AG04449 (cell line): ENCODE measurements at regions of chr11 and their contacts with region 1.

Region 1: GRCh38 chr11:61871158-61871597 is 20.2 kb downstream of the FADS3 start:
- DNase-seq: peak; percentile 12
- H3K4me3 ChIP-seq: peak overlapping the region; percentile 21
- CTCF ChIP-seq: peak; percentile 97

Region 2: GRCh38 chr11:61688365-61689163 is 182.6 kb before region 1 on chr11:
- CTCF ChIA-PET with region 1: no interaction called
- POLR2A ChIA-PET with region 1: no interaction called
- DNase-seq: no peak
- H3K4me3 ChIP-seq: no peak overlapping the region
- CTCF ChIP-seq: no peak

Region 3: DNA sequence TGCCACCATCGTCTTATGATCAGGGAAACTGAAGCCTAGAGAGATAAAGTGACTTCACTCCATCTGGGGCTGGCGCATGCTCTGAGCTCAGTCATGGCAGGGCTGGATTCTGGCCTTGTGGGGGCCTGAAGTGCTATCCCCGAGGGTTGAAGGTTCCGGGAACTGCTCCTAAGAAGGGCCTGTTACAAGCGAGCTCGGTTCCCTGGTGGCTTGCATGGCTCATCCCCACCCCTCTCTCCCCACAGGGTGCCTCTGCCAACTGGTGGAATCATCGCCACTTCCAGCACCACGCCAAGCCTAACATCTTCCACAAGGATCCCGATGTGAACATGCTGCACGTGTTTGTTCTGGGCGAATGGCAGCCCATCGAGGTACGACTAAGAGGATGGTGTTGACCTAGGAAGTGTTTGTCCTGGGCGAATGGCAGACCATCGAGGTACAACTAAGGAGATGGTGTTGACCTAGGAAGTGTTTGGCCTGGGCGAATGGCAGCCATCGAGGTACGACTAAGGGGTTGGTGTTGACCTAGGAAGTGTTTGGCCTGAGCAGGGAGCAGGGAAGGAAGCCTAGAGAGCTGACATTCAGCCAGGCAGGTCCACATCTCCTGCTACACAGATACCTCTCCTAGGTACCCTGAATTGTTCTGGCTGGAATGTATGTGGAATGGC is 23.1 kb before region 1 on chr11:
- CTCF ChIA-PET with region 1: interaction called, 11 read pairs
- POLR2A ChIA-PET with region 1: no interaction called
- DNase-seq: no peak
- H3K4me3 ChIP-seq: no peak overlapping the region
- CTCF ChIP-seq: no peak

Region 4: GRCh38 chr11:61860054-61860903 is 10.9 kb before region 1 on chr11:
- CTCF ChIA-PET with region 1: interaction called, 10 read pairs
- POLR2A ChIA-PET with region 1: no interaction called
- DNase-seq: no peak
- H3K4me3 ChIP-seq: no peak overlapping the region
- CTCF ChIP-seq: no peak

Region 5: DNA sequence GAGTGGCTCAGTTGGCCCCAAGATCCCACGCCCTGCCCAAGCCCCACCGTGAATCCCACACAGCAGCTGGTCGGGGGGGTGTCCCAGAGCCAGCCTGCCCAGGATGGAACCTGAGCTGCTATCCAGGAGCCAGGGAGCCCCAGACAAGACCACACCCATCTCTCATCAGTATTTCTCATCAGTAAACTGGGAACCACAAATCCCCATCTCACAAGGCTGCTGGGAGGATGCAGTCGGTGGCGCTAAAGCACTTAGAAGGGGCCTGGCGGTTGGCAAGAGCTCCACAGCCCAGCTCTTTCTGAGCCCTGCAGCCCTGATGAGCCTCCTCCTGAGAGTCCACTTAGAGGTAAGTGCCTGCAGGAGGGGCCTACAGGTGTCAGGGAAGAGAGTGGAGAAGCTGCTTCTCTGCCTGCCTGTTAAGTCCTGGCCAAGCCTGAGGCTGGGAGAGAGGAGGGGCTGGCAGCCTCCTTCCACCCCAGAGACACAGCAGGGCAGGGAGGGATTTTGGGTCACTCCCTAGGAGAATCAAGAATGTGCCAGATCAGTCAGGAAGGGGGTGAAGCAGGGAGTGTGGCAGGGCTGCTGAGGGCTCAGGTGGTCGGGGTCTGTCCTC is 14.1 kb after region 1 on chr11:
- CTCF ChIA-PET with region 1: interaction called, 79 read pairs
- POLR2A ChIA-PET with region 1: interaction called, 4 read pairs
- DNase-seq: no peak
- H3K4me3 ChIP-seq: no peak overlapping the region
- CTCF ChIP-seq: no peak

Region 6: GRCh38 chr11:61891331-61892084 is 20.3 kb after region 1 on chr11 and contains the start of gene FADS3:
- CTCF ChIA-PET with region 1: interaction called, 110 read pairs
- POLR2A ChIA-PET with region 1: interaction called, 4 read pairs
- DNase-seq: no peak
- H3K4me3 ChIP-seq: peak within 1 kb of the TSS; percentile 90
- CTCF ChIP-seq: no peak

Region 7: DNA sequence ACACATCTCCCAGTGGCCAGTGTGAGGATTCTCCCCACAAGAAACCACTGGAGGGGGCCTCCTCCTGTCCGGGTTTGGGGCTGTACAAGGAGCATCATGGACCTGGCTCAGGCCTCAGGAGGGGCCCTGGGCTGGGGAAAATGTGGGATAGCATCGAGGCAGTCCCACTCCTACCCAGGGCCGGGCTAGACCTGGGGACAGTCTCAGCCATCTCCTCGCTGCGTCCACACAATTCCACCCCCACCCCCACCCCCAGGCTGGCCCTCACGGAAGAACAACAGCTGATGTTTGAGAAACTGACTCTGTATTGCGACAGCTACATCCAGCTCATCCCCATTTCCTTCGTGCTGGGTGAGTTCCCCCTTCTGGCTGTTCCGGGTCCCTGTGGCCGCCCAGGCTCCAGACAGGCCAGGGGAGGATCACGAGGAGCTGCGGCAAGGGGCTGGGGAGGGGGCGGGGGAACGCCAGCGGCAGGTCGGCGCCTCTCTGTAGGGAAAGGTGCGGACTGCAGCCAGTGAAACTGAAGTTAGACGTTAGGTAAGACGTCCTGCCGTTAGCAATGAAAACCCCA is 83.8 kb after region 1 on chr11:
- CTCF ChIA-PET with region 1: interaction called, 233 read pairs
- POLR2A ChIA-PET with region 1: interaction called, 4 read pairs
- DNase-seq: no peak
- H3K4me3 ChIP-seq: peak overlapping the region; percentile 37
- CTCF ChIP-seq: peak; percentile 54

Region 8: DNA sequence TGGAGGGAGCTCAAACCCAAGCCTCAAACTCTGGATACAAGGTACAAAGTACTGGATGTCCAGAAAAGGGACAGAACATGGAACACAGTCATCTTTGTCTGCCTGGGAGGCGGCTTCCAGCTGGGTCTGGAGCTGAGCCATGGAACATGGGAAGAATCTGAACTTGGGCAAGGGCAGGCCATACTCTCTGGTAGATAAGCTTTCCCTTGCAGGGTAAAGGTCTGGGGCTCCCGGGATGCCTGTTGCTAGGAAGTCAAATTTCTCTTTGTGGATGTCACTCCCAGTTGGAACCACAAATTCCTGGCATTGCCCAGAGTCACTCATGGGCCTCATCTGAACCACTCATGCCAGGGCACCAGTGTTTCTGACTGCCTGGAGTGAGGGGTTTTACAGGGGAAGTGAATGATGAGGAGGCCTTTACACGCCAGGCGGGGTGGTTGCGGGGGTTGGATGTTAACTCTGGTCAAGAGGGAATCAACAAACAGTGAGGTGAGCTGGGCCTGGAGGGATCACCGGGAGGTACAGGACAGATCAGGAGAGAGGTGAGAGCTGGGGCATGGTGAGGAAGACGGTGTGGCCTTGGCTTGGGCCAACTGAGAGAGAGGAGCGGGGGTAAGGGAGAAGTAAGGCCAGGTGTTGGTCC is 90.5 kb after region 1 on chr11:
- CTCF ChIA-PET with region 1: interaction called, 17 read pairs
- POLR2A ChIA-PET with region 1: interaction called, 8 read pairs
- DNase-seq: no peak
- H3K4me3 ChIP-seq: no peak overlapping the region
- CTCF ChIP-seq: no peak